ENCODE measurements at regions of chrX and their contacts with region 1.

Region 1: DNA sequence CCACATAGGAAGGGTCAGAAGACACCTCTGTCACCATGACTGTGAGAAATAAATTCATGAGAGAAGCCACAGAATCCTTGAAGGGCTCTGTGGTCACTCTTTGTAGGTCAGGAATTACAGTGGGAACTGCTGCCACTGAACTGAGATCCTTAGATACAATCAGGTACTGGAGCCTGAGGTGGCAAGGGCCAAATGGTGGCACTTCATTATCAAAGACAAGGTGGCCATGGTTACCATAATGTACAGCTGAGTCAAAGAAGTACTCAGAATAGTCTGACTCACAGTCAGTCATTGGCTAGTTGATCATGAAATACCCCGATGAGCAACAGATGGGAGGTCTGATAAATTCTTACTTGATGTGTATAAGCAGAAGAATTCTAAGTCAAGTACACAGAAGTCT is 131.9 kb downstream of the RTL3 start:
- DNase-seq: peak; percentile 49
- ATAC-seq: peak; percentile 91
- H3K4me3 Mint-ChIP-seq: no peak overlapping the region
- H3K27ac Mint-ChIP-seq: peak overlapping the region; percentile 60
- H3K4me1 Mint-ChIP-seq: peaks cover 28% of the 10 kb centered on the region
- H3K27me3 Mint-ChIP-seq: no peaks in the 10 kb centered on the region
- CTCF ChIP-seq: no peak

Region 2: DNA sequence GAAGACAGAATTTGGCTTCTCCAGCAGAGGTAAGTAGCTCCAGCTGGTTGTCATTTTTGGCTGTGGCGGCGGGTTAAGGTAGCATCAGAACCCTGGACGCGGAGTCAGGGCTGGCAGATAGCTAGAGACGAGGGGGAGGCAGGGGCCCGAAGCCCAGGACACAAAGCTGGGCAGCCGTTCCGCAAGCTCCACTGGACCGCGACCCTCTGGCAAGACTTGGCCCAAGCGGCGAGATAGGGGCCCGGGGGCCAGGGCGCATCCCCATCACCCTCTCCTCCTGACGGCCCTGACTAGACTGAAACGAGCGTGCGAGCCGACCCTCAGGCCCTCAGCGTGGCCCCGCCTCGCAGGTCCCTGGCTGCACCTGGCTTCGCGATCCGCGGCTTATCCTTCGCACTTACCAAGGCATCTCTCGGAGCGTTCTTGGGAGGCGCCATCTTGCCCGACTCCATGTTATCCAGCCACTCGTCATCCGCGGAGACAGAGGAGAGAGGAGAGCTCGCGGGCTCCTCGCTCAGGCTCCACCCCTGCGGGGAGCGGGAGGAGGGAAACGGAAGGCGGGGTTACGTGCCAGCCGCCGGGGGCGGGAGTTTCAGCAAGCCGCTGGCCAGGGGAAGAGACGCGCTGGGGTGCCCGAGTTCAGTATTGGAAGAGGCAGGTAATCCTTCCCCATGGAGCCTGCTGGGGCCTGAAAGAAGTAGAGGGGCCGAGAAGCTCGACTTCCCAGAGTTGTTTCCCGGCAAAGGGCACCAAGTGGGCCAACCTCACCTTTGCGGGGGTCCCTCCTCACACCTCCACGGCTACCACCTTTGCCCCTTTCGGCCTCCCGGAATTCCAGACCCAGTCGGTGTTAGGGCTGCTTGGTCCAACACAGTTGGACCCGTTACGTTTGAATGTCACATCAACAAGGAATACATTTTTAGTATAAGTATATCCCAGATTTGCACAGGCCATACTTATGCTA is 387.8 kb before region 1 on chrX and contains the start of gene TAF9B:
- CTCF ChIA-PET with region 1: no interaction called
- POLR2A ChIA-PET with region 1: no interaction called
- intact Hi-C with region 1: loop called (anchors 10 kb)
- DNase-seq: peak; percentile 87
- ATAC-seq: peak; percentile 90
- H3K4me3 Mint-ChIP-seq: peak within 1 kb of the TSS; percentile 83
- H3K27ac Mint-ChIP-seq: peak within 1 kb of the TSS; percentile 86
- H3K4me1 Mint-ChIP-seq: peaks cover 10% of the 10 kb centered on the region
- H3K27me3 Mint-ChIP-seq: no peaks in the 10 kb centered on the region
- CTCF ChIP-seq: no peak
- total RNA-seq, gene TAF9B: 11.3 to 13.4 TPM

Measured in activated CD8-positive, alpha-beta T cell treated with anti-CD3 and anti-CD28 coated beads for 36 hours (primary cell).